Motor neuron (in vitro differentiated cells): ENCODE measurements at regions of chr5 and their contacts with region 1.

Region 1: DNA sequence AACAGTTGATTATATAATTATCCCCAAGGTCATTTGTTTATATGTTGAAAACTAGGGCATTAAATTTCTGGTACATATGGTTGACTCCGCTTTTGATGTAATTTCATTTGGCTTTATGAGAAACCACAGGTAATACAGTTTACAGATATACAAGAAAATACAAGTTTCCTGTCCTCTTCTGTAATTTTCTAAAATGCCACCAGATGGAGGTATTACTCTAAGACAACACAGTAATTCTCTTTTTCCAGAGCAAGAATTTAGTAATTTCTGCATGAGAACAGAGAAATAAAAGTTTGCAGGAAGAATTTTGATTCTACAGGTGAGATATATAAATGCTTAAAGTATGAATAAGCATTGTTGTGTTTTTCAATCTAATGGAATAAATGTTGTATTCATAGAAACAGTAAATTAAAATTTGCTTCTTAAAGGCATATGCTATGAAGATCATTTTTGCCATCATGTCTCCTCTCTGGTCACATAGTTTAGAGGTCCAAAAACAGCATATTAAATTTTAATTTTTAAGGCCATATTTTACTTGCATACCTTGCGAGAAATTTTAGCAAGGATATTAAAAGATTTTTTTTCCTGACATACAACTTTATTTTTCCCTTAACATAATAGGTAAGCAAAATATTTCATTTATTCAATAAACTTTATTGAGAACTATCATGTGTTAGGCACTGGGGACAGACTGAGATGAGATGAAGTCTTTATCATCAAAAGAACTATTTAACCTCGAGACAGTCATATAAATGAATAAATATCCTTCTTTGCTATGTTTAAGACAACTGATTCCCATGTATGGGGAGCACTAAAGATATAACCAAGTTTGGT is 22.7 kb downstream of the CHD1 start:
- ATAC-seq: peak in 1 of 8 experiments; percentile 49
- H3K4me3 ChIP-seq: no peak overlapping the region
- H3K27ac ChIP-seq: no peak overlapping the region
- H3K4me1 ChIP-seq: peaks cover under 1 to 2% of the 10 kb centered on the region in 2 donors

Region 2: GRCh38 chr5:99032234-99033013 is 126.3 kb after region 1 on chr5:
- in situ Hi-C with region 1: loop called in 4 of 9 experiments (anchors 10 to 25 kb)
- ATAC-seq: peak; percentile 57 to 94 (median 80)
- H3K4me3 ChIP-seq: no peak overlapping the region
- H3K27ac ChIP-seq: no peak overlapping the region
- H3K4me1 ChIP-seq: peaks cover 0 to 4% of the 10 kb centered on the region in 2 donors

Region 3: GRCh38 chr5:99060306-99061261 is 154.5 kb after region 1 on chr5:
- in situ Hi-C with region 1: loop called in 1 of 9 experiments (anchors 25 kb)
- ATAC-seq: peak; percentile 50 to 92 (median 68)
- H3K4me3 ChIP-seq: no peak overlapping the region
- H3K27ac ChIP-seq: no peak overlapping the region
- H3K4me1 ChIP-seq: peaks cover 4% of the 10 kb centered on the region in 2 donors